ENCODE measurements at regions of chr6 and their contacts with region 1.

Region 1: GRCh38 chr6:119781365-119781764 is 431.8 kb upstream of the MAN1A1 start:
- DNase-seq: no peak
- H3K4me3 ChIP-seq: no peak overlapping the region
- H3K27ac ChIP-seq: no peak overlapping the region
- H3K4me1 ChIP-seq: no peaks in the 10 kb centered on the region
- H3K27me3 ChIP-seq: peaks cover 4% of the 10 kb centered on the region
- CTCF ChIP-seq: no peak

Region 2: GRCh38 chr6:119612911-119613381 is 168.4 kb before region 1 on chr6:
- CTCF ChIA-PET with region 1: no interaction called
- dilution Hi-C with region 1: no loop called
- in situ Hi-C with region 1: no loop called
- intact Hi-C with region 1: no loop called
- DNase-seq: peak; percentile 32
- H3K4me3 ChIP-seq: no peak overlapping the region
- H3K27ac ChIP-seq: no peak overlapping the region
- H3K4me1 ChIP-seq: peaks cover 11% of the 10 kb centered on the region
- H3K27me3 ChIP-seq: no peaks in the 10 kb centered on the region
- CTCF ChIP-seq: no peak

Region 3: GRCh38 chr6:120471749-120472148 is 690.4 kb after region 1 on chr6:
- CTCF ChIA-PET with region 1: interaction called, 10 read pairs
- dilution Hi-C with region 1: no loop called
- in situ Hi-C with region 1: no loop called
- intact Hi-C with region 1: no loop called
- DNase-seq: no peak
- H3K4me3 ChIP-seq: no peak overlapping the region
- H3K27ac ChIP-seq: no peak overlapping the region
- H3K4me1 ChIP-seq: no peaks in the 10 kb centered on the region
- H3K27me3 ChIP-seq: no peaks in the 10 kb centered on the region
- CTCF ChIP-seq: no peak

Measured in mammary epithelial cell (primary cell).